A673 (cell line): ENCODE measurements at regions of chr12 and their contacts with region 1.

Region 1: GRCh38 chr12:110888256-110888991 is 32.0 kb downstream of the MYL2 start:
- DNase-seq: peak; percentile 49
- H3K4me3 ChIP-seq: peak overlapping the region; percentile 44
- H3K27ac ChIP-seq: peak overlapping the region; percentile 70
- H3K4me1 ChIP-seq: no peaks in the 10 kb centered on the region
- H3K27me3 ChIP-seq: no peaks in the 10 kb centered on the region
- CTCF ChIP-seq: peak; percentile 15; the same call in 1 of the 2 replicates

Region 2: GRCh38 chr12:110468212-110469048 is 420.0 kb before region 1 on chr12 and contains the starts of genes FAM216A and GPN3:
- CTCF ChIA-PET with region 1: no interaction called
- POLR2A ChIA-PET with region 1: no interaction called
- intact Hi-C with region 1: loop called (anchors 2 kb)
- DNase-seq: peak; percentile 99
- H3K4me3 ChIP-seq: peak within 1 kb of the TSS; percentile 83
- H3K27ac ChIP-seq: peak within 1 kb of the TSS; percentile 89
- H3K4me1 ChIP-seq: peaks cover 10% of the 10 kb centered on the region
- H3K27me3 ChIP-seq: no peaks in the 10 kb centered on the region
- CTCF ChIP-seq: no peak
- total RNA-seq, gene FAM216A: 14.0 and 17.5 TPM in 2 replicates
- total RNA-seq, gene GPN3: 51.4 and 52.7 TPM in 2 replicates

Region 3: DNA sequence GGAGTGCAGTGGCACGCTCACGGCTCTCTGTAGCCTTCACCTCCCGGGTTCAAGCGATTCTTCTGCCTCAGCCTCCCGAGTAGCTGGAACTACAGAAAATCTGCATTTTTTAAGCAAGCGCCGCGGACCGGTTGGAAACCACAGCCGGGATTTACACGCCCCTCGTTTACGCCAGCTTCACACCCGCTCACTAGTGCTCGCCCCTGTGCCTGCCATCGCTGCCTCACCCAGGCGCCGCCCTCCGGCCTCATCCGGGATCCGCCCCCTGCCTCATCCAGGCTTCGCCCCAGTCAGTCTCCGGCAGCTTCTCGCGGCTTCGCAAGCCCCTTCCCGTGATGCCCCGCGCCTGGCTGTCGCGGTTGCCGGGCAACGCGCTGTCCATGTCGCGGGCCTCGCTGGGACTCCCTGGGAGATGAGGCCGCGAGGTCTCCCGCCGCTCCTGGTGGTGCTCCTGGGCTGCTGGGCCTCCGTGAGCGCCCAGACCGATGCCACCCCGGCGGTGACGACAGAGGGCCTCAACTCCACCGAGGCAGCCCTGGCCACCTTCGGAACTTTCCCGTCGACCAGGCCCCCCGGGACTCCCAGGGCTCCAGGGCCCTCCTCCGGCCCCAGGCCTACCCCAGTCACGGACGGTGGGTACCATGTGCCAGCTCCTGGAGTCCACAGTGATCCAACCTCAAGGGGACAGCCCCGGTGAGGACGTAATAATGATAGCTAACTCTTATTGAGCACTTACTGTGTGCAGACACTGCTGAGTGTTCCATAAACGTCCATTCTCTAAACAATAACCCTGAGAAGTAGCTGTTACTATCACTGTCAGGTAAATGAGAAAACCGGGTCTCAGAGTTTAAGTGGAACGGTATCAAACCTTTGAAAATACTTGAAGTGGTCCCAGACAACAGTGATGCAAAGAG is 274.4 kb before region 1 on chr12 and contains the start of gene TCTN1:
- CTCF ChIA-PET with region 1: no interaction called
- POLR2A ChIA-PET with region 1: no interaction called
- intact Hi-C with region 1: loop called (anchors 5 kb)
- DNase-seq: peak; percentile 98
- H3K4me3 ChIP-seq: peak within 1 kb of the TSS; percentile 73
- H3K27ac ChIP-seq: peak within 1 kb of the TSS; percentile 66
- H3K4me1 ChIP-seq: peaks cover under 1% of the 10 kb centered on the region
- H3K27me3 ChIP-seq: no peaks in the 10 kb centered on the region
- CTCF ChIP-seq: no peak
- total RNA-seq, gene TCTN1: 38.8 TPM in 2 replicates

Region 4: DNA sequence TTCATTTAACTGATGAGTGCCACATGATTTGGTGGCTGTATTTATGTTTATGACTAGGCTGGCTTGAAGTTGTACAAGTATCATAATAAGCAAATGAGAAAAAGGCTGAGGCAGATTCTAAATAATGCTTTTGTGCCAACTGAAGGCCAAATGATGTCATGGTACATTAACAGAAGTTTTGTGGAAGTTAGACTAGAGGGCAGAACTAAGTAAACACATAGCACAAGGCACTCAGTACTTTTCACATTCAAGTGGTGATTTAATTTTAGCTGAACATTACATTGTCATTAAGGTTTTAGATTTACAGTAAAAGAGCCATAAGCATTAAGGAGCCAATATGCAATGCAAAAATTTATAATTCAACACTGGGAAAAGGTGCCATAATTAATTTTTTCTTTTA is 166.9 kb before region 1 on chr12:
- CTCF ChIA-PET with region 1: no interaction called
- POLR2A ChIA-PET with region 1: no interaction called
- intact Hi-C with region 1: loop called (anchors 5 kb)
- DNase-seq: no peak
- H3K4me3 ChIP-seq: no peak overlapping the region
- H3K27ac ChIP-seq: no peak overlapping the region
- H3K4me1 ChIP-seq: no peaks in the 10 kb centered on the region
- H3K27me3 ChIP-seq: no peaks in the 10 kb centered on the region
- CTCF ChIP-seq: no peak

Region 5: GRCh38 chr12:110780448-110780847 is 108.0 kb before region 1 on chr12:
- CTCF ChIA-PET with region 1: no interaction called
- POLR2A ChIA-PET with region 1: no interaction called
- intact Hi-C with region 1: no loop called
- DNase-seq: no peak
- H3K4me3 ChIP-seq: no peak overlapping the region
- H3K27ac ChIP-seq: no peak overlapping the region
- H3K4me1 ChIP-seq: peaks cover 28% of the 10 kb centered on the region
- H3K27me3 ChIP-seq: no peaks in the 10 kb centered on the region
- CTCF ChIP-seq: no peak

Region 6: GRCh38 chr12:110826592-110827200 is 61.7 kb before region 1 on chr12:
- CTCF ChIA-PET with region 1: interaction called, 9 read pairs
- POLR2A ChIA-PET with region 1: interaction called, 4 read pairs
- intact Hi-C with region 1: loop called (anchors 1 kb)
- DNase-seq: peak; percentile 94
- H3K4me3 ChIP-seq: peak overlapping the region; percentile 8
- H3K27ac ChIP-seq: no peak overlapping the region
- H3K4me1 ChIP-seq: peaks cover 4% of the 10 kb centered on the region
- H3K27me3 ChIP-seq: no peaks in the 10 kb centered on the region
- CTCF ChIP-seq: peak; percentile 98

Region 7: DNA sequence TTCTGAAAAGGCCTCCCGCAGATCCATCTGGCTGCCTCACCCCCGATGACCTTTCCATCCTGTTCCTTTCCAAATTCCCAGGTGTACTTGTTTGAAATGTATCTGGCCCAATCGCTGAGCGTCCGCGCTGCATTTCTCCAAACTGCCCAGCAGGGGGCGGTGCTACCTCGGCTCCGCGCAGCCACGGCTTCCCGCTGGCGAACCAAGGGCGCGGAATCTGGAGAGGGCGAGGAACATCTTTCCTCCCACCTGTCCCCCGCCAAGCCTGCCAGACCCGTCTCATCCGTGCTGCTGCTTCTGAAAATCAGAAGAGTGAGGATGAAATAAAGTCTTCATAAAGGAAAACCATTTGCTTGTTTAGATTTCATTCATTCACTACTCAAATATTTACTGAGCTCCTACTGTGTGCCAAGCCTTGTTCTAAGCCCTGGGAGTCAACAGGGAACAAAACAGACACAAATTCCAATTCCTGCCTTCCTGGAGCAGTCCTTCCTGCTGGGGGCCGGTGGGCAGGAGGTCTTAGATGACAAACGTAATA is 48.7 kb after region 1 on chr12:
- CTCF ChIA-PET with region 1: no interaction called
- POLR2A ChIA-PET with region 1: no interaction called
- intact Hi-C with region 1: no loop called
- DNase-seq: peak; percentile 72
- H3K4me3 ChIP-seq: no peak overlapping the region
- H3K27ac ChIP-seq: no peak overlapping the region
- H3K4me1 ChIP-seq: no peaks in the 10 kb centered on the region
- H3K27me3 ChIP-seq: no peaks in the 10 kb centered on the region
- CTCF ChIP-seq: peak; percentile 97

Region 8: DNA sequence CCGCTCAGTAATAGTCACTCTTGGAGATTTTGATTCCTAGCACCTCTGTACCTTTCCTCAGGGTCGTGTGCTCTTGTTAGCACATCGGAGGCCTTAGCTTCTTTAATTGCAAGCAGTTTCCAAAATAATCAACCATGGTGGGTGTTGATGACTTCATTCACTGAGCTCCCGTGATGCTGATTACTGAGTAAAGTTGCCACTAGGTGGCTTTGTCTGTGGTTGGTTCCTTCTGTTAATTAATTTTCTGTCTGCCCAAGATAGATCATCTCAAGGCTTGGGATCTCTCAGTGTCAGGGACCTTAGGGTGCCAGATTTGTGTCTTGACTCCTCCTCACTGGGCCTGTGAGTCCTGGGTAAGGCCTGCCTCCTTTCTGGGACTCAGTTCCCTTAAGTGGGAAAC is 1584.6 kb after region 1 on chr12:
- CTCF ChIA-PET with region 1: no interaction called
- POLR2A ChIA-PET with region 1: no interaction called
- intact Hi-C with region 1: no loop called
- DNase-seq: peak; percentile 43
- H3K4me3 ChIP-seq: no peak overlapping the region
- H3K27ac ChIP-seq: no peak overlapping the region
- H3K4me1 ChIP-seq: no peaks in the 10 kb centered on the region
- H3K27me3 ChIP-seq: no peaks in the 10 kb centered on the region
- CTCF ChIP-seq: peak; percentile 52